Transverse colon (tissue), 4 donors: ENCODE measurements at regions of chr10 and their contacts with region 1.

Region 1: GRCh38 chr10:78047314-78047891 is 13.7 kb downstream of the RPS24 start:
- DNase-seq: peak; percentile 89
- H3K4me3 ChIP-seq: no peak overlapping the region
- H3K27ac ChIP-seq: no peak overlapping the region
- H3K4me1 ChIP-seq: peaks cover 0 to 11% (median 2%) of the 10 kb centered on the region in 4 donors
- H3K27me3 ChIP-seq: no peaks in the 10 kb centered on the region
- CTCF ChIP-seq: peak; percentile 86 to 89 (median 88)
- EP300 ChIP-seq: no peak
- POLR2A ChIP-seq: no peak

Region 2: DNA sequence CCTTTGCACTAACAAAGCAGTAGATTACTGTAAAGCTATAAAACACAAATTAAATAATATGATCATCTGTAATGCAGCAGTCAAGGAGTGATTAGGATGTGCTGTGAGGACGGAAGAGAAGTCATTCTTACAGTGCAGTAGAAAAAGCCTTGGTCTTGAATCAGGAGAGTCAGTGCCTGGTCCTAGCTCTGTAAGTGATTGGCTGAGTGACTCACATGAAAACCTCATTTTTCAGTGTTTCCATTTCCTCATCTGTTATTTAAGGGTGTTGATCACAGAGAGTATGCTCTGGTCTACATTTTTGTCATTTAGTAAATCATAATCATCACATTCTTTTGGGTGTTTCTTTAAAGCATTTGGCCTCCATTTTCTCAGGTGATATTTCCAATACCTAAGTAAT is 1898.2 kb before region 1 on chr10:
- in situ Hi-C with region 1: no loop called
- intact Hi-C with region 1: no loop called
- DNase-seq: no peak
- H3K4me3 ChIP-seq: no peak overlapping the region
- H3K27ac ChIP-seq: no peak overlapping the region
- H3K4me1 ChIP-seq: peaks cover 0 to 12% (median 2%) of the 10 kb centered on the region in 4 donors
- H3K27me3 ChIP-seq: no peaks in the 10 kb centered on the region
- CTCF ChIP-seq: no peak
- EP300 ChIP-seq: no peak
- POLR2A ChIP-seq: no peak

Region 3: DNA sequence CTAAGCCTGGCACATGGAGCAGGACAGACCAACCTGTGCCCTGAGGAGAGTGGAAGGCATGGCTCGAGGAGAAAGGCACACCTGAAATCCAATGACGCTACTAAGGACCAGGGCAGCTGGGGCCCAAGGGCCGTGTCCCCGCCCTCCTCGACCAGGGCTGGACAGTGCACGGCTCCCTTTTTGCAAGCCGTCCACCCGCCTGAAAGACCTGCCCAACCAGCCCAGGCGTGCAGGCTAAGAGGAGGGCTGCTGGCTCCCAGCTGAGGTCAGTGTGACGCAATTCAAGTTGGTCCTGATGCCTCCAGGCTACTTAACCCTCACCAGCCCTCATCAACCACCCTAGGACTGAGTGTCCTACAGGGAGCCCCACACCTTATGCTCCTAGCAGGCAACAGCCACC is 190.1 kb before region 1 on chr10:
- in situ Hi-C with region 1: no loop called
- intact Hi-C with region 1: no loop called
- DNase-seq: no peak
- H3K4me3 ChIP-seq: no peak overlapping the region
- H3K27ac ChIP-seq: no peak overlapping the region
- H3K4me1 ChIP-seq: no peaks in the 10 kb centered on the region
- H3K27me3 ChIP-seq: no peaks in the 10 kb centered on the region
- CTCF ChIP-seq: no peak
- EP300 ChIP-seq: no peak
- POLR2A ChIP-seq: no peak

Region 4: GRCh38 chr10:78302989-78303854 is 255.8 kb after region 1 on chr10:
- in situ Hi-C with region 1: loop called in 1 of 4 experiments (anchors 10 kb)
- intact Hi-C with region 1: no loop called
- DNase-seq: peak; percentile 96
- H3K4me3 ChIP-seq: peak overlapping the region; percentile 45 to 73 (median 59)
- H3K27ac ChIP-seq: peak overlapping the region; percentile 89 to 93 (median 90)
- H3K4me1 ChIP-seq: peaks cover 6 to 16% (median 10%) of the 10 kb centered on the region in 4 donors
- H3K27me3 ChIP-seq: no peaks in the 10 kb centered on the region
- CTCF ChIP-seq: peak; percentile 67 to 93 (median 73)
- EP300 ChIP-seq: peak; percentile 6
- POLR2A ChIP-seq: peak; percentile 92